ENCODE measurements at regions of chr2 and their contacts with region 1.

Region 1: DNA sequence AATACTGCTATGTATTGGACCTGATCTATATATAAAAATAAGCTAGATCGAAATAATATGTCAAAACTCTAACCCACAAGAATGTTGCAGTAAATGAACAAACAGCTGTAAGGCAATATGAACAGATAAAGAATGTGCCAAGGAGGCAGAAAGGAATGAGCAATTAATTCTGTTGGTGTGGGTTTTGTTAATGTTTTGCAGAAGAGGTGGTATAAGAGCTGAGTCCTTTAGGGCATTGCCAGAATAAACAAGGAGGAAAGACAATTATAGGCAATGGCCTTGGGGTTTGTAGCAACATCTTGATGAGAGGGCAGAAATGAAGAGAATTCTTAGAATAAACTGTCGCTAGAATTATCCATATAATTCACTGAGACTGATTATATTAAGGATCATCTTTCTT is 240.9 kb upstream of the GULP1 start:
- DNase-seq: no peak
- ATAC-seq: no peak
- H3K4me3 Mint-ChIP-seq: no peak overlapping the region
- H3K27ac Mint-ChIP-seq: no peak overlapping the region
- H3K4me1 Mint-ChIP-seq: no peaks in the 10 kb centered on the region
- H3K27me3 Mint-ChIP-seq: no peaks in the 10 kb centered on the region
- CTCF ChIP-seq: no peak

Region 2: DNA sequence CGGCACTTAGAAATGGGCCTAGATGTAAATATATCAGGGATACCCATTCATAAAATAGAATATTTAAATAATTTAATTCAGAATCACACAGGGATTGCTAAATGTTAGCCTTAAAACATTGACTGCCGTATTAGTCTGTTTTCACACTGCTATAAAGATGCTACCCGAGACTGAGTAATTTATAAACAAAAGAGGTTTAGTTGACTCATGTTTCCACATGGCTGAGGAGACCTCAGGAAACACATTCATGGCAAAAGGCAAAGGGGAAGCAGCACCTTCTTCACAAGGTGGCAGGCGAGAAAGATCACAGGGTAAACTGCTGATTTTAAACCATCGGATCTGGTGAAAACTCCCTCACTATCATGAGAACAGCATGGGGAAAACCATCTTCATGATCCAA is 17.4 kb after region 1 on chr2:
- CTCF ChIA-PET with region 1: no interaction called
- POLR2A ChIA-PET with region 1: no interaction called
- intact Hi-C with region 1: no loop called
- DNase-seq: no peak
- ATAC-seq: no peak
- H3K4me3 Mint-ChIP-seq: no peak overlapping the region
- H3K27ac Mint-ChIP-seq: no peak overlapping the region
- H3K4me1 Mint-ChIP-seq: no peaks in the 10 kb centered on the region
- H3K27me3 Mint-ChIP-seq: no peaks in the 10 kb centered on the region
- CTCF ChIP-seq: no peak

Region 3: GRCh38 chr2:188369365-188369764 is 318.6 kb after region 1 on chr2:
- CTCF ChIA-PET with region 1: no interaction called
- POLR2A ChIA-PET with region 1: no interaction called
- intact Hi-C with region 1: loop called (anchors 10 kb)
- DNase-seq: peak; percentile 17
- ATAC-seq: peak; percentile 39
- H3K4me3 Mint-ChIP-seq: no peak overlapping the region
- H3K27ac Mint-ChIP-seq: no peak overlapping the region
- H3K4me1 Mint-ChIP-seq: no peaks in the 10 kb centered on the region
- H3K27me3 Mint-ChIP-seq: peaks cover 2% of the 10 kb centered on the region
- CTCF ChIP-seq: peak; percentile 42

Measured in activated CD8-positive, alpha-beta T cell treated with anti-CD3 and anti-CD28 coated beads for 36 hours (primary cell).